OCI-LY7 (cell line): ENCODE measurements at regions of chr18 and their contacts with region 1.

Region 1: DNA sequence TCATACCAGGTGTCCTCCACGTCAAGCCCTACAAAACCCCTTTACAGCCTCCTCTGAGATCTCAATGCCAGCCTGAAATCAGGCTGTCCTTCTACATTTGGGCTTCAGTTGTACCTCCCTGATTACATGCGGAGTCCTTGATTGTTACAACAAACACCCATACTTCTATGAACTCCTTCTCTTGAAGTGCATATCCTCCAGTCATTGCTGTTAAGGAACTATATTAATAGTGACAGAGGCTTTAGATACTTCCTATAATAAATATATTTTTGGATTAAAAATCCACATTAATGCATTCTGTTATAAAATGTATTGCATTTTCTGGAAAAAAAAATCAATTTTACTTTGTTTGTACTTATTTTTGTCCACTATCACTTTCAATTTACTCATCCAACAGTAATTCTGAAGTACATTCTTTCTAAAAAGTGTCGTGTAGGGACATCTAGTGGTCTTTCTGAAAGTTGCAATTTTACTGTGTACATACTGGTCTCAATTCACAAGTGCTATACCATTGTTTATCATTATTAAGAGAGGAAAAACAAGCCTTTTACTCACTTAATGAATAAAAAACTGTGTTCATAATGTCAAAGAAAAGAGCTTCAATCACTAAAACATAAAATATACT is 316.4 kb downstream of the DSEL start:
- DNase-seq: peak; percentile 16
- H3K4me3 ChIP-seq: no peak overlapping the region
- H3K27ac ChIP-seq: no peak overlapping the region
- H3K4me1 ChIP-seq: no peaks in the 10 kb centered on the region
- CTCF ChIP-seq: peak; percentile 68

Region 2: GRCh38 chr18:67104700-67105284 is 95.3 kb before region 1 on chr18:
- CTCF ChIA-PET with region 1: no interaction called
- POLR2A ChIA-PET with region 1: no interaction called
- intact Hi-C with region 1: loop called (anchors 5 kb)
- DNase-seq: peak; percentile 1
- H3K4me3 ChIP-seq: no peak overlapping the region
- H3K27ac ChIP-seq: no peak overlapping the region
- H3K4me1 ChIP-seq: no peaks in the 10 kb centered on the region
- CTCF ChIP-seq: peak; percentile 69